ENCODE measurements at regions of chr1 and their contacts with region 1.

Region 1: DNA sequence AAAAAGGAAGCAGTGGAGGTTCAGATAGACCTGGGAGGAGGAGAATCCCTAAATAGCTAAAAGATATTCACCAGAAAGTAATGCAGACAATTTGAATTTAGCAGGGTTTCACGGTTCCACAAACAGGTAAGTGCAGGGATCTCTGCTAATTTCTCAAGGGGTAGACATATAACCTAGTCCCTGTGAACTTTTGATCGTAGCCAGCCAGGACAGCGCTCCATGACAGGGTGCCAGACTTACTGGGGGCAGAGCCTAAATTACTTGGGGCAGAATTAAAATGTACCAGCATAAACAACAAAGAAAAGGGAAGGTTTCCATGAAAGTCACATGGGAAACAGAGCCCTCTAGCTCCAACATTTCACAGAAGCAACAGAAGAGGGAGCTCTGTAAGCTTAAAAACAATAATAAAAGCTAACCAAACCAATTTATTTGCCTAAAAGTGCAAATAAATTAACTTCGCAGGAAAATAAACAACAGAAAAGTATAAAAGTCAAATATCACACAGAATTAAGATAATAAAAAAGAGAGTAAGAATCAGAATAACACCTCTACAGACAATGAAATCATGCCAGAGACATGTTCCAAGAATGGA is 198.3 kb downstream of the DUSP10 start:
- DNase-seq: no peak
- H3K4me3 ChIP-seq: no peak overlapping the region
- H3K27me3 ChIP-seq: no peaks in the 10 kb centered on the region
- CTCF ChIP-seq: peak; percentile 64

Region 2: GRCh38 chr1:221435504-221435904 is 108.1 kb before region 1 on chr1:
- CTCF ChIA-PET with region 1: no interaction called
- POLR2A ChIA-PET with region 1: no interaction called
- DNase-seq: no peak
- H3K4me3 ChIP-seq: no peak overlapping the region
- H3K27me3 ChIP-seq: no peaks in the 10 kb centered on the region
- CTCF ChIP-seq: peak; percentile 86

Region 3: DNA sequence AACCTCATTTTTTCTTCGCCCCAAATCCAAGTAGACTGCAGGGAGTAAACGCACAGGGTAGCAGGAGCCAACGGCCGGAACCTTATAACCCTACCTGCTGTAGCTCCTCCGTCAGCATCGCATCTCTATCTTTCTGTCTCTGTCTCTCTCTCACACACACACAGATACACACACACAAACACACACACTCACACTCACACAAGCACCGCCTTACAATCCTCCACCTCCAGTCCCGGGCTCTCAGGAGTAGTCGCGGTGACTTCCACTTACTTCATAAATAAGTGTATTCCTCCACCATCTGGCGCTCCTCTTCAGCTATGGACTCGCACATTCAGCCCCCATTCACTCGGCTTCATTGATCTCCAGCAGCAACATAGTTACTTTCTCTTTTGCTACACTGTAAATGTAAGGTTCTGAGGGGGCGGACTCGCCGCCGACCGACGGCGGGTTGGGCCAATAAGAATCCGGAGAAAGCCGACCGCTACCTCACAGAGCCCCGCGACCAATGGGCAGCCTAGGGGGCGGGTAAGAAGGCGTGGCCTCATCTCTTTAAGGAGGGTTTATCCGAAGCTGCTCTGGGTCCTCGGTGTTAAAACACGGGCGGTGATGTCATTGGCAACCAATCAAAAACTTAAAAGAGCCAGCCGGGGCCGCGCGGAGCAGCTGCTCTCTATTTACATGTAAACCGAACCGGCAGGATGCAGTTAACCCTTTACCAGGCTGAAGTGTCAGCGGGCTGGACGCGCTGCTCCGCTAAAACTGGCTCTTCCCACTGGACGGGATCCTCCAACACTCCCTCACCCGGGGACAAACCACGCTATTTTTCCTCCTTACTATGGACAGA is 198.3 kb after region 1 on chr1 and contains the start of gene DUSP10:
- CTCF ChIA-PET with region 1: interaction called, 11 read pairs
- POLR2A ChIA-PET with region 1: no interaction called
- DNase-seq: peak; percentile 99
- H3K4me3 ChIP-seq: peak within 1 kb of the TSS; percentile 84
- H3K27me3 ChIP-seq: no peaks in the 10 kb centered on the region
- CTCF ChIP-seq: 0 out of 2 replicates have a peak, but pooled peaks have one; percentile 9
- polyA plus RNA-seq, gene DUSP10: 13.3 and 16.1 TPM in 2 replicates